Caco-2 (cell line): ENCODE measurements at regions of chr10 and their contacts with region 1.

Region 1: GRCh38 chr10:110137142-110137545 is 70.3 kb upstream of the MXI1 start:
- DNase-seq: peak in 1 of 2 experiments; percentile 64
- H3K4me3 ChIP-seq: no peak overlapping the region
- H3K4me3 Mint-ChIP-seq: no peak overlapping the region
- H3K27ac Mint-ChIP-seq: no peak overlapping the region
- H3K4me1 ChIP-seq: no peaks in the 10 kb centered on the region
- H3K4me1 Mint-ChIP-seq: peaks cover 9% of the 10 kb centered on the region
- H3K27me3 ChIP-seq: no peaks in the 10 kb centered on the region
- H3K27me3 Mint-ChIP-seq: no peaks in the 10 kb centered on the region
- CTCF ChIP-seq: peak; percentile 67 to 72

Region 2: DNA sequence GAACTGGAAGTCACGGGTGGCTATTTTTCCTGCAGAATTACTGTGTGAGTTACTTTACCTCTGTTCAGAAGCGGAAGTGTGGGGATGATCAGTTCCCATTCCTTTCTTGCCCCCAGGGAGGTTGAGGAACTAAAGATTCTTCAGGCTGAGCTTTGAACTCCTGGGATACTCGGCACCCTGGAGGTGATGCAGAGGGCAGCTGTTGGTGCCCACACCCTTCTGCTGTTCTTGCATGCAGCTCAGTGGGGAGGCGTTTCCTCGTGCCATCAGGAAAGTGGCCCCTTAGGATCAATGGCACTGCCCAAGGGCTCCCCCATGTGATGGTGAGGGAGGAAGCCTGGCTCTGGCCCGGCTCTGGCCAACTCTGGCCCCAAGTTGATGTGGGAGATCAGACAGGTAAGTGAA is 25.6 kb after region 1 on chr10:
- CTCF ChIA-PET with region 1: interaction called, 3 read pairs
- POLR2A ChIA-PET with region 1: no interaction called
- intact Hi-C with region 1: loop called (anchors 1 kb)
- DNase-seq: peak in 1 of 2 experiments; percentile 34
- H3K4me3 ChIP-seq: no peak overlapping the region
- H3K4me3 Mint-ChIP-seq: peak overlapping the region; percentile 55
- H3K27ac Mint-ChIP-seq: peak overlapping the region; percentile 79
- H3K4me1 ChIP-seq: peaks cover 39% of the 10 kb centered on the region
- H3K4me1 Mint-ChIP-seq: peaks cover 31% of the 10 kb centered on the region
- H3K27me3 ChIP-seq: no peaks in the 10 kb centered on the region
- H3K27me3 Mint-ChIP-seq: no peaks in the 10 kb centered on the region
- CTCF ChIP-seq: no peak

Region 3: DNA sequence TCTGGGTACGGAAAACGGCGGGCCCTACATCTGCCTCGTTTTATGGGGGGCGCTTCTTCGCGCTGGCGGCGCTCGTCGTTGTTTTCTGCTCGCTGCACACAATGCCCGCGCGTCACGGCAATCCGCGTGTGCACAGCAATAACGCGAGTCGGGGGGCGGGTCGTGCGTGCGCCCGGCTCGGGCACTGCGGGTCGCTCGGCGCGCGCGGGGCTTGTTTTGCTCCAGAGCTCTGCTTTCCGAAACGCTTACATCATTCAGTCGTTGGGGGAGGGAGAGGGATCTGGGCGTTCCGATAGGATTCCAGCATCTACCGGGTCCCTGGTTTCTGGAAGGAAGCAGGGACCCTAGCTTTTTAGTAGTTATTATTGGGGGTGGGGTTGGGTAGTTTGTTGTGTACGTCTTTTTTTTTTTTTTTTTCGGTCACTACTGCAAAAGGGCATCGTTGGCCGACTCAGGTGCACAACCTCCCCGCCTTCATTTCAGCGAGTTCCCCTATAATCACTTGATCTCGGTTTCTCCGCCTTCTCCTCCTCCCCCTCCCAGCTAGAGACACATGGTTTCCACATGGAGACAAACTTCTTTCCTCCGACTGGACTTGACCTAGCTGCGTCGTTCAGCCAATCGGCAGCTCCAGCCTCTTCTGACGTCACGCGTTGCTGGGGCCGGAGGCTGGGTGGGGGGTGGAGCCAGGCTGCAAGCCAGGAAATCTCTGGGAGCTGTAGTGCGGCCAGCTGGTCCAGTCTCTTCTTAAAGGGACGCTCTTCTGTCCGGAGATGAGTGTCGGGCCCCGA is 73.7 kb after region 1 on chr10:
- CTCF ChIA-PET with region 1: interaction called, 14 read pairs
- POLR2A ChIA-PET with region 1: interaction called, 3 read pairs
- intact Hi-C with region 1: loop called (anchors 1 kb)
- DNase-seq: peak; percentile 96 to 97
- H3K4me3 ChIP-seq: peak overlapping the region; percentile 79
- H3K4me3 Mint-ChIP-seq: peak overlapping the region; percentile 81
- H3K27ac Mint-ChIP-seq: peak overlapping the region; percentile 74
- H3K4me1 ChIP-seq: peaks cover 6% of the 10 kb centered on the region; the same call in 1 of the 2 replicates
- H3K4me1 Mint-ChIP-seq: peaks cover 28% of the 10 kb centered on the region
- H3K27me3 ChIP-seq: no peaks in the 10 kb centered on the region
- H3K27me3 Mint-ChIP-seq: no peaks in the 10 kb centered on the region
- CTCF ChIP-seq: no peak

Region 4: GRCh38 chr10:110279407-110279986 is 142.4 kb after region 1 on chr10:
- CTCF ChIA-PET with region 1: interaction called, 4 read pairs
- POLR2A ChIA-PET with region 1: no interaction called
- intact Hi-C with region 1: loop called (anchors 1 kb)
- DNase-seq: peak; percentile 53 to 62
- H3K4me3 ChIP-seq: no peak overlapping the region
- H3K4me3 Mint-ChIP-seq: peak overlapping the region; percentile 19
- H3K27ac Mint-ChIP-seq: no peak overlapping the region
- H3K4me1 ChIP-seq: no peaks in the 10 kb centered on the region
- H3K4me1 Mint-ChIP-seq: no peaks in the 10 kb centered on the region
- H3K27me3 ChIP-seq: no peaks in the 10 kb centered on the region
- H3K27me3 Mint-ChIP-seq: no peaks in the 10 kb centered on the region
- CTCF ChIP-seq: peak; percentile 65 to 83

Region 5: DNA sequence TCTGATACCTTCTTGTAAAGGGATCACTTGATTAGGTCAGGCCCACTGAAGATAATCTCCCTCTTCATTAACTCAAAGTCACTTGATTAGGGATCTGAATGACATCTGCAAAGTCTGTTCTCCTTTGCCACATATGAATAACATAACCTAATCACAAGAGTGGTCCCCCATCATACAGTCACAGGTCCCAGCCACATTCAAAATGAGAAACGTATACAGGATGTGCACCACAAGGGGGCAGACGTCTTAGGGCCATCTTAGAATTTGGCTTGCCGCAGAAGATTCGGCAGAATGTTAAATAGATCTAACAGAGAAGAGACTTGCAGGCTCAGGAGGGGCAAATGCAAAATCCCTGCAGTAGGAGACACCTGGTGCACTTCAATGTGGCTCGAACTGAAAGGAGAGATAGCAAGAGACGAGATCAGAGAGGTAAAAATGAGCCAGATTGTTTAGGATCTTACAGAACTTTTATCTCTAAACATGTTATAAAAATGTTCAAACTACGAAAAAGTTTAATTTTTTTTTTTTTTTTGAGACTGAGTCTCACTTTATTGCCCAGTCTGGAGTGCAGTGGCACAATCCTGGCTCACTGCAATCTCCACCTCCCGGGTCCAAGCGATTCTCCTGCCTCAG is 419.9 kb after region 1 on chr10:
- CTCF ChIA-PET with region 1: no interaction called
- POLR2A ChIA-PET with region 1: no interaction called
- intact Hi-C with region 1: loop called (anchors 10 kb)
- DNase-seq: peak in 1 of 2 experiments; percentile 42
- H3K4me3 ChIP-seq: no peak overlapping the region
- H3K4me3 Mint-ChIP-seq: no peak overlapping the region
- H3K27ac Mint-ChIP-seq: peak overlapping the region; percentile 11
- H3K4me1 ChIP-seq: peaks cover 39% of the 10 kb centered on the region
- H3K4me1 Mint-ChIP-seq: peaks cover 43% of the 10 kb centered on the region
- H3K27me3 ChIP-seq: no peaks in the 10 kb centered on the region
- H3K27me3 Mint-ChIP-seq: no peaks in the 10 kb centered on the region
- CTCF ChIP-seq: peak; percentile 27 to 53